Caco-2 (cell line): ENCODE measurements at regions of chr9 and their contacts with region 1.

Region 1: DNA sequence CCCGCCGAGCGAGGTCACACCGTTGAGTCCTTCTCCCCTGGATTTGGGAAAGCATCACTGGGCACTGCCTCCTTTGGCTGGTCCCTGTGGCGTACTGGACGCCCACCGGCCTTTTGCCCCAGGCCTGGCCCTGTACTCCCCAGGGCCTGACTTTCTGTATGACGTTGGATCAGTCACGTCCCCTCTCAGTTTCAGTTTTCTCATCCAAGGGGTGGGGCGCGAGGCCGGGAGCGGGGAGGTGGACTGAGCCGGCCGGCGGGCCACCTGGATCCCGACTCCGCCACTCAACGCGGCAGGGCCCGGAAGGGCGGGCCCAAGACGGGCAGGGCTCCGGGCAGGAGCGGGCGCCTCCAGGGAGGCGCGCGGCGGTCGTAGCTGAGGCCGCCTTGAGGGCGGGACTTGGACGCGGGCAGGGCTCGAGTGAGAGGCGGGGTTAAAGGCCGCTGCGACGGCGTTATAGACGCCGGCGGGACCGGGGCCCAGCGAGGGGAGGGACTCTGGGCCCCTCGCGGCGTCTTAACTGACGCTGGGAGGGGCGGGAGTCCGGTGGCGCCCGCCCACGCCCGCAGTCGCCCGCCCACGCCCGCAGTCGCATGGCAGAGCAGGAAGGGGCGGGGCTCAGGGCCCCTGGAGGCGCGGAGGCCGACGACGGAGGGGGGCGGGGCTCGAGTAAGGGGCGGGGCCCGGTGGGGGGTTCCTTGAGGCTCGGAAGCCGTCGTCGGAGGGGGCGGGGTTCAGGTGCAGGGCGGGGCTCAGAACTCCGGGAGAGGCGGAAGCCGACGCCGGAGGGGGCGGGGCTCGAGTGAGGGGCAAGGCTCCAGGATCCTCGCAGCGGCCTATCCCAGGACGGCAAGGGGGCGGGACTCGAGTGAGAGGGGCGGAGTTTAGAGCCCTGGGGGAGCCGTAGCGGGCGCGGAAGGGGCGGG is 549 bp upstream of the CARD19 start:
- DNase-seq: peak; percentile 97 to 98
- H3K4me3 ChIP-seq: peak overlapping the region; percentile 38
- H3K4me3 Mint-ChIP-seq: peak overlapping the region; percentile 75
- H3K27ac Mint-ChIP-seq: peak overlapping the region; percentile 63
- H3K4me1 ChIP-seq: peaks cover 7% of the 10 kb centered on the region; the same call in 1 of the 2 replicates
- H3K4me1 Mint-ChIP-seq: no peaks in the 10 kb centered on the region
- H3K27me3 ChIP-seq: no peaks in the 10 kb centered on the region
- H3K27me3 Mint-ChIP-seq: no peaks in the 10 kb centered on the region
- CTCF ChIP-seq: no peak

Region 2: DNA sequence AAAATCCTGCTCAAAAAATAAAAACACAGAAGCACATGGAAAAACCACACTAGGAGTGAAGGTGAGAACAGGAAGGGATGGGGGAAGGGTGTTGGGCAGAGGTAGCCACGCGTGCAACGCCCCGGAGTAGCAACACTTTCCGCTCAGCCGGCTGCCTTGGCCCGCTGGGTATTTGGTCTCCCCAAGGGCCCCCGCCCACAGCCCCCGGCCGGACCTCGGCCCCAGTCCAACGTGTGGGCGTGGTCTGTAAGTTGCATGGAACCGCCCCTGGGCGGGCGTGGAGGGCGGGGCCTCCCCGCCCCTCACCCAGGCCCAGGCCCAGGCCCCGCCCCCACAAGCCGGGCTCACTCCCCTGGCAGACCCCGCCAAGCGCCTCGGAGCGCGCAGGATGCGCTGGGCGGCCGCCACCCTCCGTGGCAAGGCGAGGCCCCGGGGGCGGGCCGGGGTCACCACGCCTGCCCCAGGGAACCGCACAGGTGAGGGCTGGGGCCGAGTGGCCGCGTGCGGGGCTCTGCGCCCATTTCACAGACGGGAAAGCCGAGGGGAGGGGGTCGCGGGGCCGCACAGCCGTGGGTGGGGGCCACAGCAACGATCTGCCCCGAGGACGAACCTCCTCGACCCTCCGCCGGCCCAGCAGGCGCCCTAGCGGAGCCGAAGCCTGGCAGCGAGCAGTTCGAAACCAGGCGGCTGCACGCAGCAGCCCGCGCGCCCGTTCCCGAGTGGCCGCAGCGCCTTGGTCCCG is 36.9 kb before region 1 on chr9 and contains the start of gene SUSD3:
- CTCF ChIA-PET with region 1: interaction called, 3 read pairs
- POLR2A ChIA-PET with region 1: interaction called, 9 read pairs
- intact Hi-C with region 1: loop called (anchors 5 kb)
- DNase-seq: peak; percentile 65 to 73
- H3K4me3 ChIP-seq: peak within 1 kb of the TSS; percentile 41
- H3K4me3 Mint-ChIP-seq: peak within 1 kb of the TSS; percentile 60
- H3K27ac Mint-ChIP-seq: peak within 1 kb of the TSS; percentile 22
- H3K4me1 ChIP-seq: peaks cover 16% of the 10 kb centered on the region
- H3K4me1 Mint-ChIP-seq: no peaks in the 10 kb centered on the region
- H3K27me3 ChIP-seq: no peaks in the 10 kb centered on the region
- H3K27me3 Mint-ChIP-seq: no peaks in the 10 kb centered on the region
- CTCF ChIP-seq: no peak
- total RNA-seq, gene SUSD3: 2.2 and 2.9 TPM in 2 replicates